ENCODE measurements at regions of chr17 and their contacts with region 1.

Region 1: DNA sequence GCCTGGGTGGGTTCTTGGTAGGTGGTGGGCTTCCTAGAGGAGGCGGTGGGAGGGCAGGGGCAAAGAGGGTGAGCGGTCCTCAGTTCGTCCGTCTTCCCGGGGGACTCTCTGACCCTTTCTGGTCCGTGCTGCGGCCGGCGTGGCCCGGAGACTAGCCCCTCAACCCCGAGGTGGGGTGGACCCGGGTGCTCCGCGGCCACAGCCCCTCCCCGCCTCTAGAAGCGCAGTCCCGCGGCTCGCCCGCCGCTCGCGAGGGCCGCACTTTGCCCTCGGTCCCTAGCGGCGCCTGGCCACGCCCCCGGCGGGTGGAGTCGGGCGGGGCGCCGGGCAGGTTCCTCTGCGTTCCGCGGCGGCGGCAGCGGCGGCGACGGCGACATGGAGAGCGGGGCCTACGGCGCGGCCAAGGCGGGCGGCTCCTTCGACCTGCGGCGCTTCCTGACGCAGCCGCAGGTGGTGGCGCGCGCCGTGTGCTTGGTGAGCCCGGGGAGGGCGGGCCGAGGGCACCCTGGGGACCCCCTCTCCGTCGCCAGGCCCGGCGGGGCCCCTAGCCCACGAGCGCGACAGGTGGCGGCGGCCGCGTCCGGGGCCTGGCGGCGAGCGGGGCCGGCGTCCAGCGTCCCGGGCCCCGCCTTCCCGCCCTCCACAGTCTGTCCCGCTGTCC is at the start of gene SYNGR2:
- DNase-seq: peak; percentile 83 to 97
- ATAC-seq: peak; percentile 64 to 66
- H3K4me3 ChIP-seq: peak within 1 kb of the TSS; percentile 89
- H3K27ac ChIP-seq: peak within 1 kb of the TSS; percentile 86 to 96
- H3K4me1 ChIP-seq: peaks cover 26% of the 10 kb centered on the region
- CTCF ChIP-seq: no peak
- EP300 ChIP-seq: no peak
- POLR2A ChIP-seq: peak; percentile 76
- RAD21 ChIP-seq: no peak
- polyA plus RNA-seq, gene SYNGR2: 113 and 133 TPM in 2 replicates

Region 2: GRCh38 chr17:78133971-78134898 is 34.1 kb before region 1 on chr17:
- CTCF ChIA-PET with region 1: interaction called, 295 read pairs
- POLR2A ChIA-PET with region 1: no interaction called
- DNase-seq: peak; percentile 79 to 80
- ATAC-seq: peak; percentile 51 to 72
- H3K4me3 ChIP-seq: no peak overlapping the region
- H3K27ac ChIP-seq: no peak overlapping the region
- H3K4me1 ChIP-seq: 0 out of 3 replicates have a peak, but pooled peaks cover 2% of the 10 kb centered on the region
- CTCF ChIP-seq: peak; percentile 65
- EP300 ChIP-seq: no peak
- POLR2A ChIP-seq: no peak
- RAD21 ChIP-seq: peak; percentile 51 to 69

Region 3: GRCh38 chr17:78140169-78140976 is 28.0 kb before region 1 on chr17:
- CTCF ChIA-PET with region 1: interaction called, 295 read pairs
- POLR2A ChIA-PET with region 1: interaction called, 8 read pairs
- DNase-seq: peak; percentile 90 to 100
- ATAC-seq: peak; percentile 61 to 84
- H3K4me3 ChIP-seq: peak overlapping the region; percentile 33
- H3K27ac ChIP-seq: peak overlapping the region; percentile 61 to 87
- H3K4me1 ChIP-seq: peaks cover 46% of the 10 kb centered on the region
- CTCF ChIP-seq: no peak
- EP300 ChIP-seq: no peak
- POLR2A ChIP-seq: peak; percentile 71
- RAD21 ChIP-seq: no peak

Region 4: GRCh38 chr17:78231991-78232858 is 63.9 kb after region 1 on chr17:
- CTCF ChIA-PET with region 1: no interaction called
- POLR2A ChIA-PET with region 1: no interaction called
- DNase-seq: no peak
- ATAC-seq: peak in 1 of 2 experiments; percentile 38; a peak in 3 of 6 replicates
- H3K4me3 ChIP-seq: peak overlapping the region; percentile 35; the same call in 2 of the 3 replicates
- H3K27ac ChIP-seq: peak overlapping the region in 1 of 2 experiments; percentile 61; a peak in 2 of 6 replicates
- H3K4me1 ChIP-seq: no peaks in the 10 kb centered on the region; the same call in 2 of the 3 replicates
- CTCF ChIP-seq: no peak
- EP300 ChIP-seq: no peak
- POLR2A ChIP-seq: no peak
- RAD21 ChIP-seq: no peak